Esophagus muscularis mucosa (tissue), 4 donors: ENCODE measurements at regions of chr15 and their contacts with region 1.

Region 1: DNA sequence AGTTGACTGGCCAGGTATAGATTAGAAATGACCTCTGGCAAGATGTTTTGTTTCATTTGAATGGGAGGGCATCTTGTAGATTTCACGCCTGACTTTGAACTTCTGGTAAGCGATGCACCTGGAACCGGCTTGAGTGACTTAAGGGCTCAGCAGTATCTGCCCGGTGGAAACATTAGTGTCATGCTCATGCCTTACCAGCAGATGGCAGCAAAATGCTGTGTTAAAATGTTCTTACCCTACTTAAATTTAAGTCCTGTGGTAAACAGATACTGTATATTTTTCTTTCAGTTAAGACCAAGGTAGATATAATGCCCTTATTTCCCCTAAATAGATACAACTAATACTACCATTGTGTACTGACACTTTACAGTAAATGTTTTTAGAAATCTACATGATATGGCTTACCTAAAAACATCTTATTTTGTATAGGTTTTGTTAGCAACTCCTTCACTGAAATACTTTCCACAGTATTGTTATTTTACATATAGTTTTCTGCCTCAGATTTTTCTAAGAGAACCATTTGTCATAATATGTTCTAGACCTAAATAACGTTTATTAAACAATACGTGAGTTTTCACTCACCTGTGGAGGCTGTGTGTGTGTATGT is 25.5 kb downstream of the ASB7 start:
- DNase-seq: no peak
- H3K4me3 ChIP-seq: no peak overlapping the region
- H3K27ac ChIP-seq: no peak overlapping the region
- H3K4me1 ChIP-seq: peaks cover 0 to 14% (median 0%) of the 10 kb centered on the region in 4 donors
- H3K27me3 ChIP-seq: no peaks in the 10 kb centered on the region
- CTCF ChIP-seq: peak; percentile 86 to 89 (median 86)
- EP300 ChIP-seq: no peak
- POLR2A ChIP-seq: no peak

Region 2: DNA sequence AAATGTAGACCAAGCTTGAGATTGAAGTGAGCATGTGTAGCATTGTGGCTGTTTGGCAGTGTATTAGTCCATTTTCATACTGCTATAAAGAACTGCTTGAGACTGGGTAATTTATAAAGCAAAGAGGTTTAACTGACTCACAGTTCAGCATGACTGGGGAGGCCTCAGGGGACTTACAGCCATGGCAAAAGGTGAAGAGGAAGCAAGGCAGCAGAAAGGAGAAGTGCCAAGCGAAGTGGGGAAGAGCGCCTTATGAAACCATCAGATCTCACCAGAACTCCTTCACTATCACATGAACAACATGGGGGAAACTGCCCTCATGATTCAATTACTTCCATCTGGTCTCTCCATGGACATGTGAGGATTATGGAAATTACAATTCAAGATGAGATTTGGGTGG is 90.6 kb before region 1 on chr15:
- intact Hi-C with region 1: no loop called
- DNase-seq: peak; percentile 42
- H3K4me3 ChIP-seq: no peak overlapping the region
- H3K27ac ChIP-seq: no peak overlapping the region
- H3K4me1 ChIP-seq: no peaks in the 10 kb centered on the region
- H3K27me3 ChIP-seq: peaks cover 0 to 28% (median 0%) of the 10 kb centered on the region in 4 donors
- CTCF ChIP-seq: no peak
- EP300 ChIP-seq: no peak
- POLR2A ChIP-seq: no peak

Region 3: GRCh38 chr15:100671858-100672543 is 44.1 kb after region 1 on chr15:
- intact Hi-C with region 1: no loop called
- DNase-seq: no peak
- H3K4me3 ChIP-seq: no peak overlapping the region
- H3K27ac ChIP-seq: no peak overlapping the region
- H3K4me1 ChIP-seq: peaks cover 0 to 16% (median 12%) of the 10 kb centered on the region in 4 donors
- H3K27me3 ChIP-seq: no peaks in the 10 kb centered on the region
- CTCF ChIP-seq: peak; percentile 21 to 30 (median 21)
- EP300 ChIP-seq: no peak
- POLR2A ChIP-seq: no peak

Region 4: DNA sequence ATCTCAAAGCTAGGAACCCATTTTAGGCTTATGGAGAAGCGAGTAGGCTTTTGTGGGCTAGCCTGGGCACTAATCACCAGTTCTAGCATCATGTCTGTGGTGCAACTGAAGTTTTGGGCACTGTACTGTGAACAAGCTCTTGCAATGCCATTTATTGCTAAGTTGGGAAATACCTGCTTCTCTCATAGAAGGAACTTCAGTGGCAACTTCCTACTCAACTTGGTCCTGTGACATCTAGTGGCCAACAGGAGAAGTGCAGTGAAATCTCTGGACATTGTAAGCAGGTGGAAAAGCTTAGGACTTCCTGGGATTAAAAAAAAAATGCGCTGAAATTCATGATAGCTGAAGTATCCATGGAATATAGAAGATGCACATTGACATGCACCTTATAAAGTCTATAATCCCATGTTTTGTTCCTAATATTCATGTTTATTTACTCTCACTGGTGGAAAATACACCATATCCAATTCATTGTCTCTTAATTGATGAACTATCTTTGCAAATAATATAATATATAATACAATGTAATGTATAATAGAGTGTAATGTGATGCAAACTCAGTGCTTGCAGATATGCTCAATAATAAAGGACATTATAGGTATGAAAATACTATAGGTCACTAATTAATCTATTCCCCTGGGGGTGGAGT is 245.3 kb after region 1 on chr15:
- intact Hi-C with region 1: loop called (anchors 2 kb)
- DNase-seq: no peak
- H3K4me3 ChIP-seq: no peak overlapping the region
- H3K27ac ChIP-seq: no peak overlapping the region
- H3K4me1 ChIP-seq: no peaks in the 10 kb centered on the region
- H3K27me3 ChIP-seq: peaks cover 0 to 18% (median 0%) of the 10 kb centered on the region in 4 donors
- CTCF ChIP-seq: peak; percentile 91 to 98 (median 93)
- EP300 ChIP-seq: no peak
- POLR2A ChIP-seq: no peak

Region 5: GRCh38 chr15:101006934-101007691 is 379.2 kb after region 1 on chr15:
- intact Hi-C with region 1: loop called (anchors 2 kb)
- DNase-seq: peak; percentile 95
- H3K4me3 ChIP-seq: peak overlapping the region in 1 of 4 donors; percentile 57
- H3K27ac ChIP-seq: peak overlapping the region in 1 of 4 donors; percentile 6
- H3K4me1 ChIP-seq: peaks cover 10 to 23% (median 20%) of the 10 kb centered on the region in 4 donors
- H3K27me3 ChIP-seq: no peaks in the 10 kb centered on the region
- CTCF ChIP-seq: peak; percentile 89 to 91 (median 90)
- EP300 ChIP-seq: no peak
- POLR2A ChIP-seq: no peak